ENCODE measurements at regions of chr15 and their contacts with region 1.

Region 1: DNA sequence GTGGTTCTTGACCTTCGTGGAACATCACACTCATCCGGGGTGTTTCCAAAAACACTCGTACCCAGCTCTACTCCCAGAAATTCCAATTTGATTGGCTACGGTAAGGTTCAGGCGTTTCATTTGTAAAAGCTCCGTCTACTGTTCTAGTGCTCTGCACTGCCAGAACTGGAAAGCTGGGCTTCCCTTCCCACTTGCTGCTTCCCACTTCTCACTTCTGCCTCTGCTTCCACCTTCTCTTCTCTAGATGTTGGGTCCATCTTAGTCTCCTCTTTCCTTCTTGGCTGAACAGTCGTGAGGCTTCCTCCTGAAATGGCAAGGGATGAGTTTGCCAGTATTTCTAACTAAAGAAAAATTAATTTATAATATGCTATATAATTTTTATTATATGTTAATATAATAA is 29.8 kb upstream of the RHCG start:
- DNase-seq: no peak
- ATAC-seq: no peak
- H3K4me3 ChIP-seq: no peak overlapping the region
- H3K27ac ChIP-seq: no peak overlapping the region
- H3K4me1 ChIP-seq: no peaks in the 10 kb centered on the region
- H3K27me3 ChIP-seq: no peaks in the 10 kb centered on the region
- CTCF ChIP-seq: no peak

Region 2: GRCh38 chr15:89335289-89336041 is 190.7 kb before region 1 on chr15:
- CTCF ChIA-PET with region 1: no interaction called
- POLR2A ChIA-PET with region 1: no interaction called
- in situ Hi-C with region 1: no loop called
- intact Hi-C with region 1: no loop called
- DNase-seq: no peak
- ATAC-seq: no peak
- H3K4me3 ChIP-seq: peak overlapping the region; percentile 53 to 82
- H3K27ac ChIP-seq: peak overlapping the region; percentile 61
- H3K4me1 ChIP-seq: peaks cover 32% of the 10 kb centered on the region
- H3K27me3 ChIP-seq: no peaks in the 10 kb centered on the region
- CTCF ChIP-seq: no peak

Region 3: GRCh38 chr15:90042356-90042755 is 516.2 kb after region 1 on chr15:
- CTCF ChIA-PET with region 1: no interaction called
- POLR2A ChIA-PET with region 1: interaction called, 19 read pairs
- in situ Hi-C with region 1: no loop called
- intact Hi-C with region 1: no loop called
- DNase-seq: no peak
- ATAC-seq: no peak
- H3K4me3 ChIP-seq: no peak overlapping the region
- H3K27ac ChIP-seq: no peak overlapping the region
- H3K4me1 ChIP-seq: no peaks in the 10 kb centered on the region; the same call in 1 of the 2 replicates
- H3K27me3 ChIP-seq: no peaks in the 10 kb centered on the region
- CTCF ChIP-seq: no peak

Region 4: DNA sequence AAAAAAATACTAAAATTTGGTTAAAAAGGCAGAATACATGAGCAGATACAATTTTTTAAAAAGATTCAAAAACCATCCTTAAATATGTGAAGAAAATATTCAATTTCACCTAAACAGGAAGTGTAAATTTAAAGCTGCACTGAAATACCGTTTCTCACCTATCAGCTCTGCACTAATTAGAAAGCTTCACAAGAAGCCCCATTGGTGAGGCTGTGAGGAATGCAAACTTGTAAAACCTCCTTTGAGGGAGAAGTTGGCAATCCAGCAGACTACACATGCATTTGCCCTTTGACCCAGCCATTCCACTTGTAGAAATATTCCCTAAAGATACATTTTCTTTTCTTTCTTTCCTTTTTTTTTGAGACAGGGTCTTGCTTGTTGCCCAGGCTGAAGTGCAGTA is 1209.7 kb after region 1 on chr15:
- CTCF ChIA-PET with region 1: no interaction called
- POLR2A ChIA-PET with region 1: no interaction called
- in situ Hi-C with region 1: no loop called
- intact Hi-C with region 1: no loop called
- DNase-seq: no peak
- ATAC-seq: no peak
- H3K4me3 ChIP-seq: no peak overlapping the region
- H3K27ac ChIP-seq: no peak overlapping the region
- H3K4me1 ChIP-seq: no peaks in the 10 kb centered on the region
- H3K27me3 ChIP-seq: no peaks in the 10 kb centered on the region
- CTCF ChIP-seq: no peak

Measured in Panc1 (cell line).